ENCODE measurements at regions of chr9 and their contacts with region 1.

Region 1: DNA sequence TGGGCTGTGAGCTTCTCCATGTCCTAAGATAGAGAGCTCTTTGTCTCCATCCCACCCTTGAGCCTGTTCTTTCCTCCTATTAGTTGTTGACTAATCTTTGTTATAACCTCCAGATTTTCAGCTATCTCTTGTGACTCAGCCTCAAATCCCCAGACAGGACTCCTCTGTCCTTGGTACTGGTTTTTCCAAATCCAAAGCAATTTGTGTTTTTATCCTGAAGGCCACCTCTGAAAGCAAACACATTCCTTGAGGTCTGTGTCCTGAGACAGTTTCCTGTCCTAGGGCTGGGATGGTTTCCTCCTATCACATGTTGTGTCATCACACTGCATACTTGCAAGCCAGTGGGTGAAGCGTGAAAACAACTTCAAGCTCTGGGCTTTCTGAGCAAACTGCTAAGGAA is 8.5 kb downstream of the TNC start:
- DNase-seq: no peak
- ATAC-seq: no peak
- H3K4me3 ChIP-seq: no peak overlapping the region
- H3K4me3 Mint-ChIP-seq: no peak overlapping the region
- H3K27ac ChIP-seq: no peak overlapping the region
- H3K27ac Mint-ChIP-seq: no peak overlapping the region
- H3K4me1 ChIP-seq: no peaks in the 10 kb centered on the region
- H3K4me1 Mint-ChIP-seq: no peaks in the 10 kb centered on the region
- H3K27me3 ChIP-seq: peaks cover 6% of the 10 kb centered on the region in 2 experiments
- H3K27me3 Mint-ChIP-seq: peaks cover 55% of the 10 kb centered on the region
- CTCF ChIP-seq: no peak

Region 2: DNA sequence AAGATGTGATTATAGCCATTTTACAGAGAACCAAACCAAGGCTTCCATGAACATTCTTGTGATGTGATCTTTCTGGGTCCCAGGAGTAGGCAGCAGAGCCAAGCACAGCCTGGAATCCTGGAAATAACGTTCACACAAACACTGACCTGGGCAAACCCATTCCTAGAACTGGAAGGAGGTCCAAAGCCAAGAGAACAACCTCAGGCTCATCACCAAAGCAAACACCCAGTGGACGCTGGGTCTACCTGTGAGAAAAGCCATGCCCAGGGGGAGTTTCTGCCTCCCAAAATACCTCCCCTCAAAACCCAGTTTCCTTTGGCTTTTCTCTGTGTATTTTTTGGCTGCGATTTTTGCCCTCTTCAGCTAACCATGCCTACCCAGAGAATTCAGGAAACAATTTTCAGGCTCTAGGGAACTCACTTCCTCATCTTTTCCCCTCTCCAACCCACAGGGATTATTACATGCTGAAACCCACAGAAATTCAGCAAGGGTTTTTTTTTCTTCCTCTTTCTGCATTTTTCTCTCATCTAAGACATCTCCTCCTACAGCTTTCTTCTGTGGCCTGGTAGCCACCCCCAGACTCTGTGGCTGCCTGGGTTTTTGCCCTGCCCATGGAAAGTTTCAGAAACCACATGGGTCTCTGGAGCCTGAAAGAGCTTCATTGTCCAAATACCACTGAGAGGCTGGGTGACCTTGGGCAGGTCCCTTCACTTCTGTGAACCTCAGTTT is 66.5 kb before region 1 on chr9:
- CTCF ChIA-PET with region 1: no interaction called
- POLR2A ChIA-PET with region 1: no interaction called
- intact Hi-C with region 1: loop called in 1 of 2 experiments (anchors 10 kb)
- DNase-seq: peak in 2 of 14 experiments; percentile 3 to 7
- ATAC-seq: no peak
- H3K4me3 ChIP-seq: no peak overlapping the region
- H3K4me3 Mint-ChIP-seq: no peak overlapping the region
- H3K27ac ChIP-seq: no peak overlapping the region
- H3K27ac Mint-ChIP-seq: no peak overlapping the region
- H3K4me1 ChIP-seq: no peaks in the 10 kb centered on the region
- H3K4me1 Mint-ChIP-seq: no peaks in the 10 kb centered on the region
- H3K27me3 ChIP-seq: no peaks in the 10 kb centered on the region
- H3K27me3 Mint-ChIP-seq: peaks cover 9% of the 10 kb centered on the region
- CTCF ChIP-seq: no peak

Region 3: GRCh38 chr9:115088860-115089259 is 20.6 kb before region 1 on chr9:
- CTCF ChIA-PET with region 1: no interaction called
- POLR2A ChIA-PET with region 1: no interaction called
- intact Hi-C with region 1: no loop called
- DNase-seq: no peak
- ATAC-seq: no peak
- H3K4me3 ChIP-seq: no peak overlapping the region
- H3K4me3 Mint-ChIP-seq: no peak overlapping the region
- H3K27ac ChIP-seq: no peak overlapping the region
- H3K27ac Mint-ChIP-seq: no peak overlapping the region
- H3K4me1 ChIP-seq: no peaks in the 10 kb centered on the region
- H3K4me1 Mint-ChIP-seq: no peaks in the 10 kb centered on the region
- H3K27me3 ChIP-seq: peaks cover 2 to 4% of the 10 kb centered on the region in 2 experiments
- H3K27me3 Mint-ChIP-seq: peaks cover 10% of the 10 kb centered on the region
- CTCF ChIP-seq: no peak

Measured in CD4-positive, alpha-beta T cell (primary cell).